HepG2 (cell line): ENCODE measurements at regions of chr17 and their contacts with region 1.

Region 1: GRCh38 chr17:72733619-72734282 is 358.7 kb downstream of the SLC39A11 start:
- DNase-seq: peak; percentile 66
- ATAC-seq: peak; percentile 97
- H3K4me3 ChIP-seq: no peak overlapping the region
- H3K27ac ChIP-seq: no peak overlapping the region
- H3K4me1 ChIP-seq: peaks cover 19% of the 10 kb centered on the region
- H3K27me3 ChIP-seq: no peaks in the 10 kb centered on the region
- CTCF ChIP-seq: no peak
- EP300 ChIP-seq: no peak
- POLR2A ChIP-seq: no peak
- RAD21 ChIP-seq: no peak

Region 2: GRCh38 chr17:72788950-72789585 is 55.3 kb after region 1 on chr17:
- CTCF ChIA-PET with region 1: no interaction called
- POLR2A ChIA-PET with region 1: no interaction called
- in situ Hi-C with region 1: no loop called
- intact Hi-C with region 1: loop called (anchors 2 kb)
- DNase-seq: peak; percentile 85
- ATAC-seq: peak; percentile 87
- H3K4me3 ChIP-seq: no peak overlapping the region
- H3K27ac ChIP-seq: peak overlapping the region; percentile 37
- H3K4me1 ChIP-seq: peaks cover 31% of the 10 kb centered on the region
- H3K27me3 ChIP-seq: no peaks in the 10 kb centered on the region
- CTCF ChIP-seq: no peak
- EP300 ChIP-seq: peak in 1 of 2 experiments; percentile 28; a peak in 1 of 4 replicates
- POLR2A ChIP-seq: no peak
- RAD21 ChIP-seq: no peak